Heart right ventricle (tissue), 16 donors: ENCODE measurements at regions of chr6 and their contacts with region 1.

Region 1: GRCh38 chr6:30489081-30490025 is at the start of gene HLA-E:
- DNase-seq: peak; percentile 79 to 97
- ATAC-seq: peak; percentile 93 to 97 (median 96)
- H3K4me3 ChIP-seq: peak within 1 kb of the TSS; percentile 69 to 97 (median 88)
- H3K27ac ChIP-seq: peak within 1 kb of the TSS; percentile 93 to 100 (median 98)
- H3K4me1 ChIP-seq: peaks cover 0 to 52% (median 24%) of the 10 kb centered on the region in 9 donors
- H3K27me3 ChIP-seq: peaks cover 0 to 11% (median 0%) of the 10 kb centered on the region in 7 donors
- CTCF ChIP-seq: no peak
- total RNA-seq, gene HLA-E: 121 to 482 (median 155) TPM

Region 2: GRCh38 chr6:30533460-30534294 is 44.3 kb after region 1 on chr6:
- intact Hi-C with region 1: loop called in 5 of 10 experiments (anchors 5 kb)
- DNase-seq: no peak
- ATAC-seq: peak in 2 of 8 donors; percentile 20 to 26
- H3K4me3 ChIP-seq: no peak overlapping the region
- H3K27ac ChIP-seq: peak overlapping the region in 7 of 10 donors; percentile 9 to 80 (median 71)
- H3K4me1 ChIP-seq: peaks cover 0 to 30% (median 9%) of the 10 kb centered on the region in 9 donors
- H3K27me3 ChIP-seq: no peaks in the 10 kb centered on the region
- CTCF ChIP-seq: no peak

Region 3: GRCh38 chr6:30590994-30591393 is 101.6 kb after region 1 on chr6:
- intact Hi-C with region 1: loop called in 7 of 10 experiments (anchors 2 to 10 kb)
- DNase-seq: no peak
- ATAC-seq: peak in 1 of 8 donors; percentile 34
- H3K4me3 ChIP-seq: no peak overlapping the region
- H3K27ac ChIP-seq: no peak overlapping the region
- H3K4me1 ChIP-seq: no peaks in the 10 kb centered on the region
- H3K27me3 ChIP-seq: no peaks in the 10 kb centered on the region
- CTCF ChIP-seq: no peak

Region 4: DNA sequence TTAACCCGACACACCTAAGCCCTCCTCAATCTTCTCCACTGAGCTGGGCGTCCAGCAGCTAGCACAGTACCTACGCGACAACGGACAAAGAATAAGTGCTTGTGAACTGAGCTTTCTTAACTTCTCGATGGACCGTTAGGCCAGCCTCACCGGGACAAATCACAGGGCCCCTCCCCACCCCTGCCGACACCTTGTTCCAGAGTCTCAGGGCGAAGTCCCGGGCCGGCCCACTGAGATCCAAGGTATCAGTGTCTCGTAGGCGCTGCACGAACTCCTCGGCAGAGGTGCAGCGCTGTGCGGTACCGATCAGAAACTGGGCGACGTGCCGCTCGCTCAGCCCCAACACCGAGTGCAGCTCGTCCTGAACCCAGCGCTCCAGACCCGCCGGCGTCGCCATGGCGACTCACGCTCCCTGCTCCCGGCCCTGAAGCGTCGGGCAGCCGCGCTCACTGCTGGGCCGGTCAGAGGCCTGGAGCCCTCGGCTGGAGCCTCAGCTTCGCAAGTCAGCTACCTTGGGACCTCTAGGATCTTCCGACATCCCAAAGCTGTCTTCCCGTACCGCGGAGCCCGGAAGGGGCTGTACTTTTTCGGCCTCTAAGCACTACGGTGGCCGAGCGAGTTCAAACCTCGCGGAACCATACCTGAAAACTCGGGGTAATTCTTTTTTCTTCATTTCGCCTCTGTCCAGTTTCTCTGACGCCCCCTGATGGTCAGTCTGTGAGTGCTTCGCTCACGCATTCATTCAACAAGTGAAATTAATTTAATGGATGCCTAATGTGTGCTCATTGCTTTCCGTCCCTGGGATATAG is 183.3 kb after region 1 on chr6 and contains the start of gene DHX16:
- intact Hi-C with region 1: loop called in 5 of 10 experiments (anchors 5 to 10 kb)
- DNase-seq: peak; percentile 94 to 98
- ATAC-seq: peak; percentile 86 to 95 (median 91)
- H3K4me3 ChIP-seq: peak within 1 kb of the TSS; percentile 70 to 99 (median 89)
- H3K27ac ChIP-seq: peak within 1 kb of the TSS in 9 of 10 donors; percentile 57 to 91 (median 79)
- H3K4me1 ChIP-seq: peaks cover 0 to 30% (median 18%) of the 10 kb centered on the region in 9 donors
- H3K27me3 ChIP-seq: no peaks in the 10 kb centered on the region
- CTCF ChIP-seq: peak; percentile 79 to 93 (median 87)
- total RNA-seq, gene DHX16: 15.9 to 22.9 (median 20.9) TPM